ENCODE measurements at regions of chr4 and their contacts with region 1.

Region 1: DNA sequence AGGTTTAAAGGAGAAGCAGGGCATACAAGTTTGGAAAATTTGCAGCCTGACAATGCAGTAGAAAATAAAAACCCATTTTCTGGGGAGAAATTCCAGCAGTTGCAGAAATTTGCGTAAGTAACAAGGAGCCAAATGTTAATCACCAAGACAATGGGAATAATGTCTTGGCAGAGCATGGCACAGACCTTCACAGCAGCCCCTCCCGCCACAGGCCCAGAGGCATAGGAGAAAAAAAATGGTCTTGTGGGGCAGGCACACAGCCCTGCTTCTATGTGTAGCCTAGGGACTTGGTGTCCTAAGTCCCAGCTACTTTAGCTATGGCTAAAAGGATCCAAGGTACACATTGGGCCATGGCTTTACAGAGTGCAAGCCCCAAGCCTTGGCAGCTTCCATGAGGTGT is 65.7 kb downstream of the SPOCK3 start:
- DNase-seq: no peak
- H3K4me3 ChIP-seq: no peak overlapping the region
- H3K27ac ChIP-seq: no peak overlapping the region
- H3K4me1 ChIP-seq: no peaks in the 10 kb centered on the region
- H3K27me3 ChIP-seq: peaks cover 1% of the 10 kb centered on the region
- CTCF ChIP-seq: no peak

Region 2: GRCh38 chr4:167129146-167129545 is 39.5 kb before region 1 on chr4:
- CTCF ChIA-PET with region 1: no interaction called
- dilution Hi-C with region 1: loop called (anchors 5 kb)
- in situ Hi-C with region 1: no loop called
- intact Hi-C with region 1: no loop called
- DNase-seq: no peak
- H3K4me3 ChIP-seq: no peak overlapping the region
- H3K27ac ChIP-seq: no peak overlapping the region
- H3K4me1 ChIP-seq: no peaks in the 10 kb centered on the region
- H3K27me3 ChIP-seq: no peaks in the 10 kb centered on the region
- CTCF ChIP-seq: no peak